Psoas muscle (tissue), 8 donors: ENCODE measurements at regions of chr15 and their contacts with region 1.

Region 1: GRCh38 chr15:57861036-57861638 is 154.6 kb downstream of the POLR2M start:
- DNase-seq: no peak
- ATAC-seq: peak in 2 of 4 donors; percentile 32 to 72
- H3K4me3 ChIP-seq: no peak overlapping the region
- H3K27ac ChIP-seq: no peak overlapping the region
- H3K4me1 ChIP-seq: no peaks in the 10 kb centered on the region
- H3K27me3 ChIP-seq: peaks cover 0 to 3% (median 0%) of the 10 kb centered on the region in 3 donors
- CTCF ChIP-seq: peak; percentile 90

Region 2: DNA sequence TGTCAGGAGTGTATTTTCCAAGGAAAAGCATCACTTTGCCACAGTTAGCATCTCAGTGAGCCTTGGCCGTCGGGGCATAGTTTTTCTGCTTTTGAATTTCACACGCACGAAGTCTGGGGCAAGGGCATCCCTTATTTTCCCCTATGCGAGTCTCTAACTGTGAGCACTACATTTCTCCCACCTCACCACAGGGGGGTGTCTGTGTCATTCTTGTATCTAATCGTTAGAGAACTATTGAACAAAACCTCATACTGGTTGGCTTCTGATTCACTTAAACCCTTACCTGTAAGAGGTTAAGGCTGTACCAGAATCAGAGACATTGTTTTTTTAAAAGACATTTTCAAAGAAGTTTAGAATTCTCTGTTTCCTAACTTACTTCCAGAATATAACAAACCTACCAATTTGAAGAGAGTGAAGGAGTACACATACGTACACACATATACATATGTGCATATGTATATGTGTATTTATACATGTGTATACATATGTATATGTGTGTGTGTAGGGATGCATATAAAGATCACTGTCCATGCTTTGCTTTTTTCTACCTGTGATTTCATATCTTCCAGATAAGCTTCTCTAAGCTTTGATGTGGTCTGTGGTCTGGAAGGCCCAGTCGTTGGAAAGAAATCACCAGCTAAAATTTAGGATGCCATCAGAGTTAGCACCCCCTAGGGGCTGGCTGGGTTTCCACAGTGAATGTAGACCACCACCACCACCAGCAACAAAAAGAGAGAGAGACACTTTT is 220.0 kb before region 1 on chr15:
- intact Hi-C with region 1: loop called in 1 of 2 experiments (anchors 5 kb)
- DNase-seq: no peak
- ATAC-seq: peak in 3 of 4 donors; percentile 65 to 82 (median 74)
- H3K4me3 ChIP-seq: no peak overlapping the region
- H3K27ac ChIP-seq: no peak overlapping the region
- H3K4me1 ChIP-seq: peaks cover under 1% of the 10 kb centered on the region
- H3K27me3 ChIP-seq: no peaks in the 10 kb centered on the region
- CTCF ChIP-seq: peak; percentile 38

Region 3: GRCh38 chr15:57751177-57751800 is 109.8 kb before region 1 on chr15:
- intact Hi-C with region 1: loop called in 1 of 2 experiments (anchors 2 kb)
- DNase-seq: no peak
- ATAC-seq: no peak
- H3K4me3 ChIP-seq: no peak overlapping the region
- H3K27ac ChIP-seq: no peak overlapping the region
- H3K4me1 ChIP-seq: no peaks in the 10 kb centered on the region
- H3K27me3 ChIP-seq: no peaks in the 10 kb centered on the region
- CTCF ChIP-seq: peak; percentile 35

Region 4: GRCh38 chr15:57827021-57827420 is 34.1 kb before region 1 on chr15:
- intact Hi-C with region 1: no loop called
- DNase-seq: no peak
- ATAC-seq: no peak
- H3K4me3 ChIP-seq: no peak overlapping the region
- H3K27ac ChIP-seq: no peak overlapping the region
- H3K4me1 ChIP-seq: no peaks in the 10 kb centered on the region
- H3K27me3 ChIP-seq: peaks cover 0 to 7% (median 3%) of the 10 kb centered on the region in 3 donors
- CTCF ChIP-seq: no peak